ENCODE measurements at regions of chr3 and their contacts with region 1.

Region 1: DNA sequence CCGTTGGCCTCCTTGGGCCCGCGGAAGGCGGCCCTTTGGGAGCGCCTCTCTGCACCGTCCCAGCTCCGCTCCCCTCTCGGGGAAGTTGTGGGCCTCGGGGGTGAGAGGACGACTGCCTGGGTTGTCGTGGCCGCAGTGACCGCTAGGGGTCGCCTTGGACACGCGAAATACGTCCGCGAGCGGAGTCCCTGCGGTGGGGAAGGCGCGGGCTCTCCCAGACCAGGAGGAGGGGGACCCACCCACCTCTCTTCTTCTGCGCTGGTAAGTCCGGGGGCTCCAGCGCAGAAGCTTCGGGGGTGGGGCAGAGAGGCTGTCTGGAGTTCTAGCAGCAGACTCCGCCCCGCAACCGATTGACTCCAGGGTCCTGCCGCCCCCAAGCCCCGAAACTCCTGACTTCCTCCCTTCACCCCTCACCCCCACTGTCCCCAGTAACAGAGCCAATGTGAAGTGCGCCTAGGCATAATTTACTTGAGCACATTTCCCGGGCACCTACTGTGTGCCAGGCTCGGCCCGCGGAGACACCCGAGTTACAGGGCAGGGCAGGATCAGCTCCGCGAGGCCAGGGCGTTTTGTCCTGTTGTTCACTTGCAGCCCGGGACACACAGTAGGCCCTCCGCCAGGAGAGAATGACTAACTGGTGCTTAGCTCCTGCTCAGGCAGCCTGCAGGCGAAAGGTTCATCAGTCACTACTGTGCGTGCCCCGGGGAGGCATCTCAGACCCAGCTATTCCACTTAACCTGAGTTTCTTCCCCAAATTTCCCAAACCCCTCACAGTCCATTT is 32.8 kb downstream of the DNASE1L3 start:
- DNase-seq: peak; percentile 91
- ATAC-seq: peak; percentile 89
- H3K4me3 Mint-ChIP-seq: peak overlapping the region; percentile 48
- H3K27ac Mint-ChIP-seq: no peak overlapping the region
- H3K4me1 Mint-ChIP-seq: peaks cover 18% of the 10 kb centered on the region
- H3K27me3 Mint-ChIP-seq: peaks cover 8% of the 10 kb centered on the region
- CTCF ChIP-seq: peak; percentile 98

Region 2: DNA sequence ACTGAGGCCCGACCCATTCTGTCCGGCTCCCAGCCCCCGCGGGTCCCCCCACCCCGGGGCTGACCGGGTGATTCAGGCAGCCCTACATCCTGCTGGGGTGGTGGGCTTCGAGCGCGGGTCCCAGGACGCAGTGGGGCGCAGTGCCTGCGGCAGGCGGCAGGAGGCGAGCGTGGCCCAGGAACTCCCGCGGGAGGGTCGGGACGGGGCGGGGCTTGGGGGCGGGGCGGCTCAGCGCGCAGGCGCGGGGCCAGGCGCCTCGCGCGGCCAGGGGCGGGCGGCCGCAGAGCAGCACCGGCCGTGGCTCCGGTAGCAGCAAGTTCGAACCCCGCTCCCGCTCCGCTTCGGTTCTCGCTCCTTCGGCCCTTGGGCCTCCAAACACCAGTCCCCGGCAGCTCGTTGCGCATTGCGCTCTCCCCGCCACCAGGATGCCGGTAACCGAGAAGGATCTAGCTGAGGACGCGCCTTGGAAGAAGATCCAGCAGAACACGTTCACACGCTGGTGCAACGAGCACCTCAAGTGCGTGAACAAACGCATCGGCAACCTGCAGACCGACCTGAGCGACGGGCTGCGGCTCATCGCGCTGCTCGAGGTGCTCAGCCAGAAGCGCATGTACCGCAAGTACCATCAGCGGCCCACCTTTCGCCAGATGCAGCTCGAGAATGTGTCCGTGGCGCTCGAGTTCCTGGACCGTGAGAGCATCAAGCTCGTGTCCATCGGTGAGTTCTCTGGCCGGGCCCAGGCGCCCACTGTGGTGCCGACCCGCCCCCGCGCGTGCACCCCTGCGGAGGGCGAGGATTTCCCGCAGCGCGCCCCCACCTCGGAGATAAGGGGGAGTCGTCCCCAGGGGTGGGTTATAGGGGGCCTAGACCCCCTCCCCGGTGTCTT is 169.6 kb before region 1 on chr3 and contains the start of gene FLNB:
- CTCF ChIA-PET with region 1: interaction called, 27 read pairs
- POLR2A ChIA-PET with region 1: no interaction called
- intact Hi-C with region 1: no loop called
- DNase-seq: peak; percentile 78
- ATAC-seq: peak; percentile 88
- H3K4me3 Mint-ChIP-seq: peak within 1 kb of the TSS; percentile 91
- H3K27ac Mint-ChIP-seq: peak within 1 kb of the TSS; percentile 87
- H3K4me1 Mint-ChIP-seq: peaks cover 31% of the 10 kb centered on the region
- H3K27me3 Mint-ChIP-seq: no peaks in the 10 kb centered on the region
- CTCF ChIP-seq: peak; percentile 77
- total RNA-seq, gene FLNB: 26.3 to 28.4 TPM

Region 3: GRCh38 chr3:58167431-58168351 is 10.2 kb before region 1 on chr3:
- CTCF ChIA-PET with region 1: interaction called, 68 read pairs
- POLR2A ChIA-PET with region 1: interaction called, 3 read pairs
- intact Hi-C with region 1: no loop called
- DNase-seq: peak; percentile 80
- ATAC-seq: peak; percentile 99
- H3K4me3 Mint-ChIP-seq: no peak overlapping the region
- H3K27ac Mint-ChIP-seq: no peak overlapping the region
- H3K4me1 Mint-ChIP-seq: peaks cover 3% of the 10 kb centered on the region
- H3K27me3 Mint-ChIP-seq: no peaks in the 10 kb centered on the region
- CTCF ChIP-seq: peak; percentile 92

Region 4: DNA sequence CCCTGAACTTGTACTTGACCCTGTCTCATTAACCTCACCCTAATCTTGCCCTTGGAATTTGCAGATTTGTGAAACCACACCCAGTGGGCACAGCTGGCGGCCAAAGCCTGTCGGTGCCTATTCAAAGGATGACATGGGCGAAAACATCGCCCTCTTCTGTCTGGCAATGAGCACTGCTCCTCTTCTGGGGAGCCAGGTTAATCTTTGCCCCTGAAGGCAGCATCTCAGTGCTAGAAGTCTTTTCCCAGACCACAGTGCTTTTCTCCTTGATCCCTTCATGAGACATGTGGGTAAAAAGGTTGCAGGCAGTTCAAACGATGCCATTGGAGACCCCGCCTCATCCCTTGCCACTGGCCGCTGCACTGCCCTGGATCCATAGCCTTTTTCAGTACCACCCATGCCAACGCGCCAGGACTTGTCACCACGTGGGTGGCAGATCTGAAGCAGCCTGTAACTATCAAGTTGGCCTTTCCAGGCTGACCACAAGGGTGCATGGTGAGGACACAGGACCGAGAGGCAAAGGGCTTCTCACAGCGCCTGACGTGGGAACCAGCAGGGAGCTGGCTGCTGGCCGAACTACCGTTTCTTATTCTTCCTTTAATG is 39.4 kb after region 1 on chr3:
- CTCF ChIA-PET with region 1: interaction called, 264 read pairs
- POLR2A ChIA-PET with region 1: no interaction called
- intact Hi-C with region 1: loop called (anchors 5 kb)
- DNase-seq: peak; percentile 74
- ATAC-seq: peak; percentile 38
- H3K4me3 Mint-ChIP-seq: no peak overlapping the region
- H3K27ac Mint-ChIP-seq: no peak overlapping the region
- H3K4me1 Mint-ChIP-seq: peaks cover 38% of the 10 kb centered on the region
- H3K27me3 Mint-ChIP-seq: peaks cover 2% of the 10 kb centered on the region
- CTCF ChIP-seq: peak; percentile 87

Region 5: DNA sequence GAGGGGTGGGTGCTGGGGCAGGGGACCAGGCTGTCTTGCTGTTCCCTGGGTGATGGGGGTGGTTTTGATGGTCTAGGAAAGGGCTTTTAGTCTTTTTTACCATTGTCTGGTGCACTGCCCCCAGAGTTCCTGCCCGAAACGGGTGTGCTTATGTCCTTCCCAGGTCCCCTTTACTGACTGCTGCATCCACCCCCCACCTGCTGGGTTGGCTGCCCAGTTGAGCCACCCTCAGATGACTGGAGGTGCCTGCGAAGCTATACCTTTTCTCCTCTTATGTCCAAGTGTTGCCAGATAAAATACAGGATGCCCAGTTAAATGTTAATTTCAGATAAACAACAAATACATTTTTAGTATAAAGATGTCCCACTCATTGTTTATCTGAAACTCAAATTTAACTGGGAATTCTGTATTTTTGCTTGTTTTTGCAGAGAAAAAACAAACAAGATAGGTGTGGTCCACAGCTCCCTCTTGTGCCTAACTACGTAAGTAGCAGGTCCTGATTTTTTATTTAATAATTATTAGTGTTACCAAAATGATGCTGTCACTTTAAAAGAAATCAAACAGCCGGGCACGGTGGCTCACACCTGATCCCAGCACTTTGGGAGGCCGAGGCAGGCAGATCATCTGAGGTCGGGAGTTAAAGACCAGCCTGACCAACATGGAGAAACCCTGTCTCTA is 122.0 kb after region 1 on chr3:
- CTCF ChIA-PET with region 1: interaction called, 12 read pairs
- POLR2A ChIA-PET with region 1: interaction called, 3 read pairs
- intact Hi-C with region 1: no loop called
- DNase-seq: no peak
- ATAC-seq: no peak
- H3K4me3 Mint-ChIP-seq: no peak overlapping the region
- H3K27ac Mint-ChIP-seq: no peak overlapping the region
- H3K4me1 Mint-ChIP-seq: no peaks in the 10 kb centered on the region
- H3K27me3 Mint-ChIP-seq: peaks cover 17% of the 10 kb centered on the region
- CTCF ChIP-seq: peak; percentile 58

Region 6: DNA sequence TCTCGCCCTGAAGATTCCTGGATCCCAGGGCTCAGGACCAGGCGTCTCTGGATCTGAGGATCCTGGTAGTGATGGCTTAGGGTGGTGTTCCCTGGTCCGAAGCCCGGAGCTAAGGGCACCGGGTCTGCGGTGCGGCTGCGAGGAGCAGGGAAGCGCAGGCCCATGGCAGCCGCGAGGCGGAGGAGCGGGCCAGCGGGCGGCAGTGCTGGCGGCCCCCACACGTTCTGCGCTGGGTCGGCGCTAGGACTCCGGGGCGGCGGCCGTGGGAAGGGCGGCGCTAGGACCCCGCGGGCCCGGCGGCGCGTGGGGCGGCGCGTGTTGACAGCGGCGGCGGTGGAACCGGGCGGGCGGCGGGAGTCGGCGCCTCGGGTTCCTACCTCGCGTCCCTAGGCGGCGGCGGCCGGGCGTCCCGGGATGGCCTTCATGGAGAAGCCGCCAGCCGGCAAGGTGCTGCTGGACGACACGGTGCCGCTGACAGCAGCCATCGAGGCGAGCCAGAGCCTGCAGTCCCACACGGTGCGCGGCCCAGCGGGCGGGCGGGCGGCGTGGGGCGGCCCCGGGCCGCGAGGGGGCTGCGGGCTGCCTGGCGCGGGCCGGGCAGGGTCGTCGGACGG is 154.7 kb after region 1 on chr3 and contains the start of gene PXK:
- CTCF ChIA-PET with region 1: interaction called, 14 read pairs
- POLR2A ChIA-PET with region 1: no interaction called
- intact Hi-C with region 1: no loop called
- DNase-seq: peak; percentile 81
- ATAC-seq: peak; percentile 89
- H3K4me3 Mint-ChIP-seq: peak within 1 kb of the TSS; percentile 92
- H3K27ac Mint-ChIP-seq: peak within 1 kb of the TSS; percentile 91
- H3K4me1 Mint-ChIP-seq: peaks cover 28% of the 10 kb centered on the region
- H3K27me3 Mint-ChIP-seq: no peaks in the 10 kb centered on the region
- CTCF ChIP-seq: no peak
- total RNA-seq, gene PXK: 22.2 to 23.6 TPM